ENCODE measurements at regions of chr7 and their contacts with region 1.

Region 1: GRCh38 chr7:112449902-112450806 is at the start of gene IFRD1:
- DNase-seq: peak; percentile 98
- H3K4me3 Mint-ChIP-seq: peak within 1 kb of the TSS; percentile 99
- H3K27ac Mint-ChIP-seq: peak within 1 kb of the TSS; percentile 99
- H3K4me1 Mint-ChIP-seq: peaks cover 39% of the 10 kb centered on the region
- H3K27me3 Mint-ChIP-seq: no peaks in the 10 kb centered on the region
- total RNA-seq, gene IFRD1: 47.3 to 50.5 TPM

Region 2: DNA sequence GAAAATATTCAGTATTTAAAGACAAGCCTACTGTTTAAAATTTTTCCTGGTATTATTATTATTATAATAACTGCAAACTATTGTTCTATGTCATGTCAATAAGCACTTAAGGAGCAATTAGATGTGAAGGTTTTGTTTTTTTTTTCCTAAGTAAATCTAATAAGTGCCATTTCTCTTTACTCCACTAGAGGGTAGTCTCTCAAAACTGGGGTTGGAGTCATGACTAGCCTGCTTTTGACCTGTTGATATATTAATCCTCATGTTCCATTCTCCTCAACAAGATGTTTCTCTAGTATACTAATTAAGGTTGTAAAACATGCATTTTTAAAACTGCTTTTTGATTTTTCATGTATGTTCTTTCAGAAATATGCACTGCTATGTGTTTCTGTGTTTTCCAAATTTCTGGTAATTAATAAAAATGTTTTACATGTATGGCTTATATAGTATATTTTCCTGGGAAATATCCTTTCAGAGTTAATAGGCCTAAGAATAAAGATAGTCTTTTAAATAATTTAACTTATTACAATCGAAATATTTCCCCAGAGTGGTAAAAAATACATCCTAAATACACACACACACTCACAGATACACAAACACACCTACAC is 1360.2 kb before region 1 on chr7:
- CTCF ChIA-PET with region 1: no interaction called
- intact Hi-C with region 1: loop called (anchors 5 kb)
- DNase-seq: no peak
- H3K4me3 Mint-ChIP-seq: no peak overlapping the region
- H3K27ac Mint-ChIP-seq: no peak overlapping the region
- H3K4me1 Mint-ChIP-seq: peaks cover 68% of the 10 kb centered on the region
- H3K27me3 Mint-ChIP-seq: no peaks in the 10 kb centered on the region

Region 3: DNA sequence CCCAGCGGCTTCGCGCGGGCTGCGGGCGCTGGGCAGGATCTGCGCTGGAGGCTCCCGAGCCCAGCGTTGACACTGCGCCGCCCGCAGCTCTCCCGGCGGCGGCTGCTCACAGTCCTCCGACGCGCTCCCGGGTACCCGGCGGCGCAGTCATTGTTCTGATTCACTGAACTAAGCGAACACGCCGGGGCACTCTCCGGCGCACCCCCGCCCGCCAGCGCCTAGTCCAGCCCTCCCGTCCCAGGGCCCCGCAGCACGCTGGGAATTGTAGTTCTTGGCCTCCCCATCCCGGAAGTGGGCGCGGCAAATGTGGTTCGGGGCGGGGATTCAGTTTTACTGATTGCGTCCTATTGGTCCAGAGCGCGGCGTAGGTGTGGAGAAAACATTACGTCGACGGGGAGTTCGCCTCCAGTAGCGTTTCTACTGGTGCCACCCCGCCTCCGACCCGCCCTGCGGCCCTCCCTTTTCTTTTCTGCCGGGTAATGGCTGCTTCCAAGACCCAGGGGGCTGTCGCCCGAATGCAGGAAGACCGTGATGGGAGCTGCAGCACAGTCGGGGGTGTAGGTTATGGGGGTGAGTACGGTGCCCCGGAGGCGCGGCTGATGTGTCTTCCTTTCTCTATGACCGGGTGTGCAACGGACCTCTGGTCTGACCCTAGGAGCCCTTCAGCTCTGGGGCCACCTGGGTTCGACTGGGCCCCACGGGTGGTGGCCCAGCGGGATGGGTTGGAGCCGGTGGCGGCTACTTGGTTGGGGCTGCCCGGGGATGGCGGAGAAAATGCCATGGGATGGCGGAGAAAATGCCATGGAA is 243.7 kb before region 1 on chr7 and contains the starts of genes DOCK4 and ZNF277:
- CTCF ChIA-PET with region 1: no interaction called
- intact Hi-C with region 1: loop called (anchors 1 kb)
- DNase-seq: peak; percentile 99
- H3K4me3 Mint-ChIP-seq: peak within 1 kb of the TSS; percentile 97
- H3K27ac Mint-ChIP-seq: peak within 1 kb of the TSS; percentile 71
- H3K4me1 Mint-ChIP-seq: peaks cover 35% of the 10 kb centered on the region
- H3K27me3 Mint-ChIP-seq: peaks cover 28% of the 10 kb centered on the region
- total RNA-seq, gene DOCK4: 0.43 to 0.62 TPM
- total RNA-seq, gene ZNF277: 27.0 to 28.2 TPM

Region 4: GRCh38 chr7:112422842-112423496 is 27.2 kb before region 1 on chr7:
- CTCF ChIA-PET with region 1: no interaction called
- intact Hi-C with region 1: loop called (anchors 1 kb)
- DNase-seq: peak; percentile 67
- H3K4me3 Mint-ChIP-seq: no peak overlapping the region
- H3K27ac Mint-ChIP-seq: no peak overlapping the region
- H3K4me1 Mint-ChIP-seq: peaks cover 23% of the 10 kb centered on the region
- H3K27me3 Mint-ChIP-seq: no peaks in the 10 kb centered on the region

Region 5: DNA sequence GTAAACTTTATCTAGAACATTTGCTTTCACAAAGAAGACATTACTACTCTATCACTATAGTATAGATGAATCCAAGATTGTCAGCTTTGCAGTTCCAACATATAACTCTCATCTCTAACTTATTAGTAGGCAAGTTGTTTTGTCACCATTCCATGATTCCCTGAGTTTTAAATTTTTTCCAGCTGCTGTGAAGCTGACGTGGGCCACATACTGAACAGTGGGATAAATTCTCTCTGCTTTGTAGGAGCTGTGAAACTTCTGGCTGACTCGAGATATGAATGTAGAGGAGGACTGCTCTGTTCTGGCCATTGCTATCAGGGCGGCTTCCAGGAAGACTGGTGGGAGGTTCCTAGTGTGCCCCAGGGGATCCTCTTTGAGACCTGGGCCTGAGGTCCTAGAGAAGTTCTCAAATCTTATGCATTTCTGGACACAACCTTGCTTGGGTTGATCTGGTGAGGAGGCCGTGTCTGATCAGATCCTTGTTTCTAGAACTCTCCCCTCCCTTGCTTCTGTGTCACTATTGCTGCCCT is 88.6 kb after region 1 on chr7:
- CTCF ChIA-PET with region 1: no interaction called
- intact Hi-C with region 1: no loop called
- DNase-seq: no peak
- H3K4me3 Mint-ChIP-seq: no peak overlapping the region
- H3K27ac Mint-ChIP-seq: no peak overlapping the region
- H3K4me1 Mint-ChIP-seq: no peaks in the 10 kb centered on the region
- H3K27me3 Mint-ChIP-seq: peaks cover 12% of the 10 kb centered on the region

Region 6: DNA sequence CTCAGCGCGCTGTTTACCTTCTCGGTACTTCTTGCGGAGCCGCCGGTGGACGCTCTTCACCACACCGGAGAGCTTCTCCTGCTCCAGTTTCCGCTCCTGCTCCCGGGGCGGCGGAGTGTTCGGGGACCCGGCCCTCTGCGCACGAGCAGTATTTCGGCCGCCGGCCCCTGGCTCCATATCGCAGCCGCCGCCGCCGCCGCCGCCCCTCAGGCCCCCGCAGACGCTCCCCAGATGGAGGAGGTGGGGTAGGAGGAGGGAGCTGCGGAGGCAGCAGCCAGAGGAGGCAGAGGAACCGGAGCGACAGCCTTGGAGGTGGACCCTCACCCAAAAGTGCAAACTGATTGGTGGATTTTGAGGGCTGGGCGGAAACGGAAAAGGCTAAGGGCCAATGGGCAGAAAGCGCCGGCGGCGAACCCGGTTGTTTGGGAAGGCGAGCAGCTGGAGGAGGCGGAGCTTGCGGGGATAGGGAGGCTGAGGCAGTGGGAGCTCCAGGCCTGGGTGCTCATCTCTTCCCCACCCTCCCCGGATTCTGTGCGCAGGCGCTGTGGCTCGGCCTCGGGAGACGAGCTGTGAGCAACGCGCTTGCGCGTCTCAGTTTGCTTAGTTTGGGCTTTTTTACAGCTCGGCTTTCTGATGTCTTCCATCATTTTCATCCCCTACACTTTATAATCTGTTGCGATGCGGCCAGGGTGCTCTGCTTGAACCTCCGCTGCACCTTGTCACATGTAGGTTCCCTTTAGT is 489.6 kb after region 1 on chr7:
- CTCF ChIA-PET with region 1: no interaction called
- intact Hi-C with region 1: loop called (anchors 1 kb)
- DNase-seq: peak; percentile 99
- H3K4me3 Mint-ChIP-seq: peak overlapping the region; percentile 94
- H3K27ac Mint-ChIP-seq: peak overlapping the region; percentile 96
- H3K4me1 Mint-ChIP-seq: peaks cover 38% of the 10 kb centered on the region
- H3K27me3 Mint-ChIP-seq: no peaks in the 10 kb centered on the region